Activated CD4-positive, alpha-beta memory T cell treated with anti-CD3 and anti-CD28 coated beads for 36 hours (primary cell): ENCODE measurements at regions of chr4 and their contacts with region 1.

Region 1: DNA sequence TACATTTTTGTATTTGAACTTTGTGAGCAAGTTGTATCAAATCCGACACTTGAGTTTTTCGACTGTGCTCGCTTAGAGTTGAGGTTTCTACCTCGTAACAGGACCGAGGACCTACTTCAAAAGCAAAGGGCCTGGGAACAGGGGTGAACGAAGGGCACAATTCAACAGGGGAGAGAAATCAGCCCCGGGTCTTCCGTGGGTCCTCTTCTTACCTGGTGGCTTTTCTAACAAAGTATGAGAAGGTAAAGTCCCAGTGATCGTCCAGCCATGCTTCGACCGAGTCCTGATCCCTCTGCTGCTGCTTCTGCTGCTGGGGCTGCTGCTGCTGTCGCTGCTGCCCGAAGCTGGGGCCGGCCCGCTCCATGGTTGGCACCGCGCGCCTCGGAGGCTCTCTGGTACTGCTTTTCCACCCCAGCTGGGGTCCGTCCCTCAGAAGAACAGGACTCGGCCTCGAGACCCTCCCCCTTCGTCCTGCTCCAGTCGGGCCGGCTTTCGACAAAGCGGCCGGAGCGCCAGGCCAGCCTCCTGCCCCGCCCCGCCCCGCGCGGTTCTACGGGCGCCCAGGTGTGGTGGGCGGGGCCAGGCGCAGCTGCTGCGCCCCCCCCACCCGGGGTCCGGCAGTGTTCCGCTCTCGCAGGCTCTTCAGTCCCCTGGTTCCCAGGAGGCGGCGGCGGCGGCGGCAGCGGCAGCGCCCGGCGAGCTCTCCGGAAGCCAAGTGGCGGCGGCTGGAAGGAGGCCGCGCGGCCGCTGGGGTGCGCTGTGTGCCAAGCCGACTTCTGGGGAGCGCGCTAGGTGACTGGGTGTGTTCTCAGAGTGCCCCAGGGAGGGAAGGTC is at the start of gene PDE5A:
- DNase-seq: peak; percentile 85
- H3K4me3 Mint-ChIP-seq: peak within 1 kb of the TSS; percentile 80
- H3K27ac Mint-ChIP-seq: no peak within 1 kb of the TSS
- H3K4me1 Mint-ChIP-seq: peaks cover 15% of the 10 kb centered on the region
- H3K27me3 Mint-ChIP-seq: peaks cover 15% of the 10 kb centered on the region
- total RNA-seq, gene PDE5A: 0.64 to 0.87 TPM

Region 2: GRCh38 chr4:118981839-118982381 is 646.6 kb before region 1 on chr4:
- CTCF ChIA-PET with region 1: interaction called, 12 read pairs
- POLR2A ChIA-PET with region 1: no interaction called
- intact Hi-C with region 1: loop called (anchors 1 kb)
- DNase-seq: peak; percentile 55
- H3K4me3 Mint-ChIP-seq: no peak overlapping the region
- H3K27ac Mint-ChIP-seq: no peak overlapping the region
- H3K4me1 Mint-ChIP-seq: peaks cover 1% of the 10 kb centered on the region
- H3K27me3 Mint-ChIP-seq: peaks cover 2% of the 10 kb centered on the region

Region 3: DNA sequence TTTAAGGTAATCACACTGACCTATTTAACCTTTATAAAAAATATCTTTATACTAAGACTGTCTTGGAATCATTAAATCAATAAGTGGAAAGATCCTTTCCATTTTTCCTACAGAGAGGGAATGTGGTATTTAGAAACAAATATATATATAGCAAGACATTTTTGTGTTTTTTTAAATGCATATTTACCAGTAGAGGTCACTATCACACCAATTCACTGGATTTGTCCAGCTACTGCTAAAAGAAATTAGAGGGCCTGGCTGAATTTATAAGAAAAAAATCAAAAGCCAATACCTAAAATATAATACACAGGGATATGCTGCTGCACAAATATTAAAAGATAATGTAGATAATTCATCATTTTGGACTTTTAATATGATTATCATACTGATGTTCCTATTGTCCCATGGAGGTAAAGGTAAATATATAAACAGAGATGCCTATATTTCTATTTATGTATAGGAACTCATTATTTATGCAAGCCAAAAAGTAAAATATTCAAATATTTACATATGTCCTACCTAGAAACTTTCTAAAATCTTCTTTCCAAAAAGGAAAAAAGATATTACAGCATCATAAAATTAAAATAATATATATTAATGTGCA is 69.4 kb before region 1 on chr4:
- CTCF ChIA-PET with region 1: interaction called, 21 read pairs
- POLR2A ChIA-PET with region 1: no interaction called
- intact Hi-C with region 1: loop called (anchors 2 kb)
- DNase-seq: no peak
- H3K4me3 Mint-ChIP-seq: no peak overlapping the region
- H3K27ac Mint-ChIP-seq: no peak overlapping the region
- H3K4me1 Mint-ChIP-seq: no peaks in the 10 kb centered on the region
- H3K27me3 Mint-ChIP-seq: no peaks in the 10 kb centered on the region

Region 4: DNA sequence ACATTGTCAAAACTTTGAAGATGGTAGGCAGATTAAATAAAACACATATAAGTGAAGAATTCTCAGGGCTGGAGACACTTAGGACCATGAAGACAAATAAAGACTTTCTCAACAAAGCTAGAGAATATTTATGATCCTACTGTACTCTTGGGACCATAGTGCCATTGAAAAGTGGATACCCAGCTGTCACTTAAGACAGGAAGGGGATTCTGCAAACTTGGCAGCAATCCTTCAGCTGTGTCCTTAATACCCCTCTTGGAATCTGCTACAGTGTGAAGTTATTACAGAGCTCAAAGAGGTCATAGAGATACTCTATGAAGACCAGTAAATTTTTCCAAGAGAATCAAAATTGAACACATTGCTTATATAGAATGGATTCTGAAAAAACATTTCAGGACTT is 24.3 kb before region 1 on chr4:
- CTCF ChIA-PET with region 1: interaction called, 12 read pairs
- POLR2A ChIA-PET with region 1: no interaction called
- intact Hi-C with region 1: no loop called
- DNase-seq: no peak
- H3K4me3 Mint-ChIP-seq: no peak overlapping the region
- H3K27ac Mint-ChIP-seq: no peak overlapping the region
- H3K4me1 Mint-ChIP-seq: no peaks in the 10 kb centered on the region
- H3K27me3 Mint-ChIP-seq: peaks cover 8% of the 10 kb centered on the region

Region 5: DNA sequence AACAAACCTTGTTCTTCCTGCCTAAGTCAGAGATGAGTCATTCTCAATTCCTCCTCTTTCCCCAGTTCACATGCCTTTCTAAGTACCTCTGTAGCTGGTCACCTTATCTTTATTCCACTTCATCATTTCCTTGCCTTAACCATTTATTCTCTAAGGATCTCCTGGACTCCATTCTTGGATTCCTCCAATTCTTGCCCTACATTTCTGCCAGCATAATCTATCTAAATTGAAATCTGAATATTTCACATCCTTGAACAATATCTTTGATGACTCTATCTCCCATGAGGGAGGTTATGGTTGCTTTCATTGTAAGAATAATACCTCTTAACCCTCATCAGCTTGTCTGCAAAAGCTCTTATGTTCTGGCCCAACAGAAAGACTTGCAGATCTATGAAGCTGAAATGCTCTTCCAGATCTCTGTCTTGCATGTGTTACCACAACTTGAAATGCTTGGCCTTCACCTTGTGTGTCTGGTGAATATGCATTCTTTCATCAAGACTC is 28.6 kb after region 1 on chr4:
- CTCF ChIA-PET with region 1: interaction called, 34 read pairs
- POLR2A ChIA-PET with region 1: no interaction called
- intact Hi-C with region 1: no loop called
- DNase-seq: no peak
- H3K4me3 Mint-ChIP-seq: no peak overlapping the region
- H3K27ac Mint-ChIP-seq: no peak overlapping the region
- H3K4me1 Mint-ChIP-seq: no peaks in the 10 kb centered on the region
- H3K27me3 Mint-ChIP-seq: peaks cover 4% of the 10 kb centered on the region

Region 6: DNA sequence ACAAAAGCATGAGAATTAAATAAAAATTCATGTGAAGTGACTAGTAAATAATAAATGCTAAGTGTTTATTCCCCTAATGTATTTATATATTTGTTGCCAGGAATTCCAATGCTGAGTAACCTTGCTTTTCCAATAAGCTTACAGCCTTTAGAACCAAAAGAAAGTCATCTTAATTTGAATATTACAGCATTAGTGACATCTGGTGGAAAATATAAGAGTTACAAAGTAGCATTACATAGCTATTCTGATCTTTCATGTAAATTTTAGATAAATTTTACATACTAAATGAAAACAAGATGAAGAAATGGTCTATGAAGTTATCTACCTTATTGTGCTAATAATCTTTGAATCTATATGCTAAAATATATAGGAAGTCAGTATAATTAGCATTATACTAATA is 427.7 kb after region 1 on chr4:
- CTCF ChIA-PET with region 1: interaction called, 43 read pairs
- POLR2A ChIA-PET with region 1: no interaction called
- intact Hi-C with region 1: no loop called
- DNase-seq: no peak
- H3K4me3 Mint-ChIP-seq: no peak overlapping the region
- H3K27ac Mint-ChIP-seq: no peak overlapping the region
- H3K4me1 Mint-ChIP-seq: peaks cover 7% of the 10 kb centered on the region
- H3K27me3 Mint-ChIP-seq: no peaks in the 10 kb centered on the region

Region 7: DNA sequence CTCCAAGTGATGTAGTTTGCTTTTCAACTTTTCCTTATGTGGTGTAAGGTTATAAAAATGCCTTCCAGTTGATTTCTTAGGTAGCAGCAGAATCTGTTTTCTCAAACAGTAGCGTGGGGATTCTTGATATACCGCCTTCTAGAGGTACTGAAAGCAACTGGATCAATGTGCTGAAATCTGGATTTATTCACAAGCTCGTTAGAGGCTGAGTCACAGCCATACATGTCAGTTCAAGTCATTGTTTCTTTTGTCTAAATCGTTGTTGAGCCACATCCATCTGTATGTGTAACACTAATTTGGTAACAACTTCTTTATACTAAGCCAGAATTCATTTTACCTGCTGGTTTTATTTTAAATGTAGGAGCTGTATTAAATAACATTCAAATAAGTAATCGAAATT is 638.1 kb after region 1 on chr4:
- CTCF ChIA-PET with region 1: no interaction called
- POLR2A ChIA-PET with region 1: no interaction called
- intact Hi-C with region 1: no loop called
- DNase-seq: no peak
- H3K4me3 Mint-ChIP-seq: no peak overlapping the region
- H3K27ac Mint-ChIP-seq: no peak overlapping the region
- H3K4me1 Mint-ChIP-seq: no peaks in the 10 kb centered on the region
- H3K27me3 Mint-ChIP-seq: no peaks in the 10 kb centered on the region